Dendritic cell treated with granulocyte-macrophage colony-stimulating factor and Interleukin-4, amounts not matched to agents 40 ng/mL and 50 ng/mL, for 4 days (primary cell): ENCODE measurements at regions of chr15 and their contacts with region 1.

Region 1: GRCh38 chr15:53197426-53197839 is 407.3 kb upstream of the ONECUT1 start:
- H3K4me3 Mint-ChIP-seq: no peak overlapping the region
- H3K27ac Mint-ChIP-seq: no peak overlapping the region
- H3K4me1 Mint-ChIP-seq: peaks cover 8% of the 10 kb centered on the region
- H3K27me3 Mint-ChIP-seq: peaks cover 17% of the 10 kb centered on the region

Region 2: DNA sequence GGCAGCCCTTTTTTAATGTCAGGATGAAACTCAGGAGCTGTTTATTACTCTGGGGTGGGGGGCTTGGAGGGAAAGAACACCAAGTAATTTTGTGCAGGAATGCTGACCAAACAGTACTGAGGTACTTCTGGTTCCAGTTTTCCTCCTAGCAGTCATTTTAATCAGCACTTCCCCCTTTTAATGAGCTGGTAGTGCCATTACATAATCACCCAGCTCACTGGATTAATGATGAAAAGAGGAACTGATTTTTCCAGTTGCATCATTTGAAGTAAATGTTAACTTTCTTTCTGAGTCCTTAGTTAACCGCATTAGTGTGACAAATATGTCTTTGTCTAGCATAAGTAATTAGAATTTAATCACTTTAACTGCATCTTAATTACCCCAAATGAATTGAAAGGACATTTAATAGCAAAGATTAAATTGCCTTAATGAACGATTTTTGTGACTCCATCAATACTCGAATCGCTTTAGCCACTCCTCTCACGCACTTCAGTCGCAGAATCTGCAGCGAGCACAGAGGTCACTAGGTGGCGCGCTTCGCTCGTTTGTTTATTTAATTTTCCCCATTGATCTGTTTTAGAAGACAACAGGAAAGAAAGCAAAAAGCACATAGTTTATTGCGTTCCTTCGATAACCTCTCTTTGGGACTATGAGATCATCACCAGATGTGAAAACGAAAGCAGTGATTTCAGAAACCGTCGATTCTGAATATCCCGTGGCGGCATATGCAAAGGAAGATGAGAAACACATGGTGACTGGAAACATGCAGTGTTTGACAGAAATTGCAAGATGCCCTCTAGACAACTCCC is 417.1 kb before region 1 on chr15:
- intact Hi-C with region 1: loop called (anchors 5 kb)
- H3K4me3 Mint-ChIP-seq: peak overlapping the region; percentile 58
- H3K27ac Mint-ChIP-seq: peak overlapping the region; percentile 82
- H3K4me1 Mint-ChIP-seq: peaks cover 45% of the 10 kb centered on the region
- H3K27me3 Mint-ChIP-seq: peaks cover 57% of the 10 kb centered on the region

Region 3: DNA sequence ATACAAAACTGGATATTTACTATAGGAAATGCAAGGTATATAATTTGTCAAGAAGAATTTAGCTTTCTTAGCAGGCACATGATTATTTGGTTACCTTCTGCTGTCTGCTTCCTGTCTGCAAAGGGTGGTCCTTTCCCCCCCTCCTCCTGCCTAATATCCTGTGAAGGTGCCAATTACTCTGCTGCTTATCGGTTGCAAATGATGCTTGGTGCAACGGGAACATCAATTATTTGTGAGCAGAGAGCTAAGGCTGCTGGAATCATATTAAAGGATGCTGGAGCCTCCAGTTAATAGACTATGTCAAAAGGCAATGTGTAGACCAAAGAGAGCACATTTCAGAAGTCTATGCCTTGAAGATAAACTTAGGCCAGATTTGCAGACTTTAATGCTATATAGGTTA is 36.4 kb after region 1 on chr15:
- intact Hi-C with region 1: no loop called
- H3K4me3 Mint-ChIP-seq: no peak overlapping the region
- H3K27ac Mint-ChIP-seq: no peak overlapping the region
- H3K4me1 Mint-ChIP-seq: no peaks in the 10 kb centered on the region
- H3K27me3 Mint-ChIP-seq: no peaks in the 10 kb centered on the region